ENCODE measurements at regions of chr12 and their contacts with region 1.

Region 1: GRCh38 chr12:56189176-56189917 is at the start of gene SMARCC2:
- DNase-seq: peak; percentile 71 to 95 (median 80)
- ATAC-seq: peak; percentile 77
- H3K4me3 ChIP-seq: peak within 1 kb of the TSS; percentile 96
- H3K4me3 Mint-ChIP-seq: peak within 1 kb of the TSS; percentile 99
- H3K27ac ChIP-seq: peak within 1 kb of the TSS; percentile 87 to 93
- H3K27ac Mint-ChIP-seq: peak within 1 kb of the TSS; percentile 99
- H3K4me1 ChIP-seq: peaks cover 33% of the 10 kb centered on the region
- H3K4me1 Mint-ChIP-seq: peaks cover 46% of the 10 kb centered on the region
- H3K27me3 ChIP-seq: no peaks in the 10 kb centered on the region
- H3K27me3 Mint-ChIP-seq: peaks cover 5% of the 10 kb centered on the region
- CTCF ChIP-seq: peak; percentile 64
- total RNA-seq, gene SMARCC2: 104 to 109 TPM

Region 2: DNA sequence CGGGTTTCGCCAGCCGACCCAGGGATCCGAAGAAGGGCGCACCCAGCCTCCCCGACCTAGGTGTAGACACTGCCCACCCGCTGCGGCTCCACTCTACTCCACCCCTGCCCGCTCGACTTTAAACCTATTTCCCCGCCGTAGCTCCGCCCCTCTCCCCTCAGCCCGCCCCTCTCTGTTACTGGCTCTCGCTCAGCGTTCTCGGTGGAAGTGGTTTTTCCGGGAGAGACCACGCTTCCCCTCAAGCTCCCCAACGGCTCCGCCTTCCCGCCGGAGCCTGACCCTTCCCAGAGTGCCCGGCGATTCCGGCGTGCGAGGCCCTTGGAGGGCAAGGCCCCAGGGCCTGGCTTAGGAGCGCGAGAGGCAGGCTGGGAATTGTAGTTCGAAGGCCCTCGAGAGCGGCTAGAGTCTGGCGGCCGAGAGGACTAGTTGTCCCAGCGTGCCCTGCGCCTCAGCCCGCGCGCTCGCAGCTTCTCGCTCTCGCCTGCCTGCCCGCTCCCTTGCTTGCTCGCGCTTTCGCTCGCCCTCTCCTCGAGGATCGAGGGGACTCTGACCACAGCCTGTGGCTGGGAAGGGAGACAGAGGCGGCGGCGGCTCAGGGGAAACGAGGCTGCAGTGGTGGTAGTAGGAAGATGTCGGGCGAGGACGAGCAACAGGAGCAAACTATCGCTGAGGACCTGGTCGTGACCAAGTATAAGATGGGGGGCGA is 85.1 kb before region 1 on chr12 and contains the start of gene PA2G4:
- CTCF ChIA-PET with region 1: interaction called, 10 read pairs
- POLR2A ChIA-PET with region 1: interaction called, 25 read pairs
- intact Hi-C with region 1: no loop called
- DNase-seq: peak; percentile 89 to 99 (median 96)
- ATAC-seq: peak; percentile 88
- H3K4me3 ChIP-seq: peak within 1 kb of the TSS; percentile 90
- H3K4me3 Mint-ChIP-seq: peak within 1 kb of the TSS; percentile 93
- H3K27ac ChIP-seq: peak within 1 kb of the TSS; percentile 63 to 95
- H3K27ac Mint-ChIP-seq: peak within 1 kb of the TSS; percentile 100
- H3K4me1 ChIP-seq: peaks cover 48% of the 10 kb centered on the region
- H3K4me1 Mint-ChIP-seq: peaks cover 67% of the 10 kb centered on the region
- H3K27me3 ChIP-seq: no peaks in the 10 kb centered on the region
- H3K27me3 Mint-ChIP-seq: no peaks in the 10 kb centered on the region
- CTCF ChIP-seq: no peak
- total RNA-seq, gene PA2G4: 51.0 to 61.0 TPM

Region 3: GRCh38 chr12:56143870-56144269 is 45.5 kb before region 1 on chr12:
- CTCF ChIA-PET with region 1: interaction called, 13 read pairs
- POLR2A ChIA-PET with region 1: interaction called, 17 read pairs
- intact Hi-C with region 1: no loop called
- DNase-seq: no peak
- ATAC-seq: no peak
- H3K4me3 ChIP-seq: no peak overlapping the region
- H3K4me3 Mint-ChIP-seq: no peak overlapping the region
- H3K27ac ChIP-seq: peak overlapping the region in 1 of 2 donors; percentile 7
- H3K27ac Mint-ChIP-seq: peak overlapping the region; percentile 81
- H3K4me1 ChIP-seq: peaks cover 51% of the 10 kb centered on the region
- H3K4me1 Mint-ChIP-seq: peaks cover 42% of the 10 kb centered on the region
- H3K27me3 ChIP-seq: no peaks in the 10 kb centered on the region
- H3K27me3 Mint-ChIP-seq: no peaks in the 10 kb centered on the region
- CTCF ChIP-seq: no peak

Region 4: GRCh38 chr12:56178347-56178746 is 11.0 kb before region 1 on chr12:
- CTCF ChIA-PET with region 1: interaction called, 17 read pairs
- POLR2A ChIA-PET with region 1: interaction called, 6 read pairs
- intact Hi-C with region 1: no loop called
- DNase-seq: no peak
- ATAC-seq: no peak
- H3K4me3 ChIP-seq: no peak overlapping the region
- H3K4me3 Mint-ChIP-seq: no peak overlapping the region
- H3K27ac ChIP-seq: no peak overlapping the region
- H3K27ac Mint-ChIP-seq: no peak overlapping the region
- H3K4me1 ChIP-seq: no peaks in the 10 kb centered on the region
- H3K4me1 Mint-ChIP-seq: no peaks in the 10 kb centered on the region
- H3K27me3 ChIP-seq: no peaks in the 10 kb centered on the region
- H3K27me3 Mint-ChIP-seq: no peaks in the 10 kb centered on the region
- CTCF ChIP-seq: no peak

Region 5: GRCh38 chr12:56243731-56244181 is 54.4 kb after region 1 on chr12:
- CTCF ChIA-PET with region 1: no interaction called
- POLR2A ChIA-PET with region 1: no interaction called
- intact Hi-C with region 1: no loop called
- DNase-seq: no peak
- ATAC-seq: no peak
- H3K4me3 ChIP-seq: no peak overlapping the region
- H3K4me3 Mint-ChIP-seq: no peak overlapping the region
- H3K27ac ChIP-seq: no peak overlapping the region
- H3K27ac Mint-ChIP-seq: no peak overlapping the region
- H3K4me1 ChIP-seq: no peaks in the 10 kb centered on the region
- H3K4me1 Mint-ChIP-seq: no peaks in the 10 kb centered on the region
- H3K27me3 ChIP-seq: no peaks in the 10 kb centered on the region
- H3K27me3 Mint-ChIP-seq: no peaks in the 10 kb centered on the region
- CTCF ChIP-seq: no peak

Region 6: DNA sequence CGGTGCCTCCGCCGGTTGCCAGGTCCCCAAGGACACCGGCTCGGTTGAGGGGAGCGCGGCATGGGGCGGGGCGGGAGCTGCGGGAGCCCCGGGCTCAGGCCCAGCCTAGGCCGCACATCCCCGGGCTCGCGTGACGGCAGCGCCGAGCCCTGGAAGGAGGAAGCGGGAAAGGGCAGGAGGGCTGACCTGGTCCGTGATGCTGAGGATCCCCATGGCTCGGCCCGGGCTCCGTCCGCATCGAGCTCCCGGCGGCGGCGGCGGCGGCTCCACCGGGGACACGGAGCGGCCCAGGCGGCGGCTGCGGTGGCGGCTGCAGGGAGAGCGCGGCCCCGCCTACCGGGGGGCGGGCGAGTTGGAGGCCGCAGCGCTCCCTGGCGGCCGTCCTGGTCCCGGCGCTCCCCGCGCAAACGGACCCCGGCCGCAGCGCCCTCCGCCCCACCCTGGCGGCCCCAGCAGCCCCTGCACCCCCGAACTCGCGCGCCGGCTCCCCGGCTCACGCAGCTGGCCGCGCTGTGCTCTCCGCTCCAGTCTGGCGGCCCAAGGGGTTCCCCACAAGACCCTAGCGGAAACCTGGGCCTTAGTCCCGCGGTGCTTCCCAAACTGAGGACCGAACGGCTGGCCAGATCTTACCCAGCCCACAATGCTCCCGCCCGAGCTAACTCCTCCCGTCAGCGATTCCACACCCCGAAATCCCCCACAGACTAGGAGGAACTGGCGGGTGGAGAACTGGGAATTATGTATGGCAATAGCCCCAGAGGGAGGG is 68.9 kb after region 1 on chr12 and contains the start of gene ANKRD52:
- CTCF ChIA-PET with region 1: interaction called, 9 read pairs
- POLR2A ChIA-PET with region 1: interaction called, 13 read pairs
- intact Hi-C with region 1: loop called (anchors 1 to 2 kb)
- DNase-seq: peak; percentile 59 to 94 (median 75)
- ATAC-seq: peak; percentile 94
- H3K4me3 ChIP-seq: peak within 1 kb of the TSS; percentile 96
- H3K4me3 Mint-ChIP-seq: peak within 1 kb of the TSS; percentile 98
- H3K27ac ChIP-seq: peak within 1 kb of the TSS; percentile 31 to 58
- H3K27ac Mint-ChIP-seq: peak within 1 kb of the TSS; percentile 77
- H3K4me1 ChIP-seq: peaks cover 27% of the 10 kb centered on the region
- H3K4me1 Mint-ChIP-seq: peaks cover 20% of the 10 kb centered on the region
- H3K27me3 ChIP-seq: no peaks in the 10 kb centered on the region
- H3K27me3 Mint-ChIP-seq: no peaks in the 10 kb centered on the region
- CTCF ChIP-seq: peak; percentile 26
- total RNA-seq, gene ANKRD52: 23.9 to 30.8 TPM